ENCODE measurements at regions of chr14 and their contacts with region 1.

Region 1: DNA sequence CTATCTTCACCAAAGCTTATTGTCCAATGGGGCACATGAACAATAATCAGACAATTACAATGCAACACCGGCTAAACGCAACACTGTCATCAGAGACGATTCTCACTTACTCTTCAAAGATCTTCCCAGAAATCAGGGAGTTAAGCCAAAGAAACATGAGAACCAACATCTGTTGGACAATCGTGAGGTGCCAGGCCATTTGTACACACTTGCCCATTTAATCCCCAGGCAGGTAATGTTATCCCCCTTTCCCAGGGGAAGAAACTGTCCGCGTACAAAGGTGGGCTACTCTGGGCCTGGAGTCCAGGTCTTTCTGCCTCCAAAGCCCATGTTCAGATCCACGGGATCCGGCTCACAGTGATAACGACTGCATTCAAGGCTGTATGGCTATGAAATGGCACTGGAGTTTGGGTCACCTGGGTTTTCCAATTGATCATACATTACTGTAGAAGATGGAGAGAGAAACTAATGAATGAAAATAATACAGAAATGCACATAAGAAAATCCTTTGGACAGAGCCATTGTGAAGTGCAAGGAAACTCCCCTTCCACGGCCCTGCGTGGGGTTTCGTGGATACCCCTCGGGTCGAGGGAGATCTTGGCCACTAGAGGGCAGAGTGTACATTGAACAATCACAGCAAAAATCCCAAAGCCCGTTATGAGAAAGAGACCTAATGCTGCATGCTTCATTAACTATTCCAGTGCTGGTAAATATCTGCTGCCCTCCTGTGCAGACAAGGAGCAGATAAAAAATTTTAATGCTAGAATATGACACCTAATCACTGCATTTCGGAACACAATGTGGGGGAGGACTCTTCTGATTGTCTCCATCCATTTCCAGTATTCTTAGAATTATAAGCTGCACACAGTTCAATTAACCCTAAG is 111.4 kb downstream of the EGLN3 start:
- DNase-seq: peak in 8 of 10 donors; percentile 36 to 70 (median 56)
- H3K4me3 ChIP-seq: peak overlapping the region in 4 of 59 donors; percentile 11 to 20 (median 16)
- H3K27ac ChIP-seq: peak overlapping the region in 14 of 59 donors; percentile 0 to 75 (median 24)
- H3K27me3 ChIP-seq: peaks cover 0 to 3% (median 0%) of the 10 kb centered on the region in 45 donors
- CTCF ChIP-seq: peak; percentile 81 to 97 (median 92)

Region 2: GRCh38 chr14:33938131-33938949 is 98.9 kb after region 1 on chr14:
- intact Hi-C with region 1: loop called in 1 of 2 experiments (anchors 5 kb)
- DNase-seq: peak in 8 of 10 donors; percentile 39 to 68 (median 60)
- H3K4me3 ChIP-seq: peak overlapping the region in 52 of 59 donors; percentile 2 to 61 (median 32)
- H3K27ac ChIP-seq: peak overlapping the region in 58 of 59 donors; percentile 12 to 88 (median 72)
- H3K27me3 ChIP-seq: no peaks in the 10 kb centered on the region
- CTCF ChIP-seq: peak in 1 of 56 donors; percentile 12

Region 3: GRCh38 chr14:34018564-34019244 is 179.3 kb after region 1 on chr14:
- intact Hi-C with region 1: loop called in 1 of 2 experiments (anchors 5 kb)
- DNase-seq: peak in 2 of 10 donors; percentile 18
- H3K4me3 ChIP-seq: peak overlapping the region; percentile 23 to 71 (median 53)
- H3K27ac ChIP-seq: peak overlapping the region in 34 of 59 donors; percentile 8 to 72 (median 34)
- H3K27me3 ChIP-seq: no peaks in the 10 kb centered on the region
- CTCF ChIP-seq: no peak

Region 4: DNA sequence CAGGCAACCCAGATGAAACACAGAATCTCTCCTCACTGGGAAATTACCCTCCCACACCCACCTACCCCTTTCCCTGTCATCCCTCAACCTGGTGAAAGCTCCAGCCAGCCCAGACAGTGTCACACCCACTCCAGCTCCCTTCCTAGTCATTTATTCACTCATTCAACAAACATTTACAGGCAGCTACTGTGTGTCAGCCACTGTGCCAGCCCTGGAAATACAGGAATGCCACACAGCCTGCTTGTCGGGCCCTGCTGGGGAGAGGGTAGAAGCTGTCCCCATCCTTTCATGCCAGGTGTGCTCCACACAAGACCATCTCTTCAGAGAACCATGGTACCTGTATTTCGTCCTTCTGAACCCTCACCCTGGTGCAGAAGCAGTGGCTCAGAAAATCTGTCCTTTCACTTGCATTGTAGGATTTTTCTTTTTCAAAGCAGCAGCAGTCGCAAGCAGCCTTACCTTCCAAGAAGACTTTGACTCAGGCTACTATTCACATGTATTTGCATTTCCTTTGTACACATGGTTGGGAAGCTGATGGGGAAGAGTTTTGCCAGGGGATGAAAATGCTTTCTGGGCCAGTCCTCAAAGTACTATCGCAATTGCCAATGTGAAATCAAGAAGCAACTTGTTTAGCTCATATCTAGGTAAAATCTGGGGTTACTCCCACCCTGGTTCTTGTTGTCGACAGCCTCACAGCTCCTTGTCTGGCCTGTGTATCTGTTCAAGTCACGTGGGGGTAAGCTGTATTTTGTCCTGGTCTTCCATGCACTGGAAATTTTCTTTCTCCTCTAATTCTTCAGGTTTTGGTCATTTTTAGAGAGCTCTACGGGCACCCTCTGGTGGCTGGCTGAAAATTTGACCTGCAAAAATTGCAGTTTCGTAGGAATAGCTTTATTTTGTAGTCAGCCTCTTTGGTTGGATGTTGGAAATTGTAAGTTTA is 258.9 kb after region 1 on chr14:
- intact Hi-C with region 1: loop called (anchors 2 kb)
- DNase-seq: peak in 7 of 10 donors; percentile 25 to 72 (median 50)
- H3K4me3 ChIP-seq: no peak overlapping the region
- H3K27ac ChIP-seq: peak overlapping the region in 23 of 59 donors; percentile 3 to 62 (median 14)
- H3K27me3 ChIP-seq: peaks cover 0 to 2% (median 0%) of the 10 kb centered on the region in 45 donors
- CTCF ChIP-seq: peak; percentile 63 to 88 (median 76)

Region 5: GRCh38 chr14:34227834-34228649 is 388.6 kb after region 1 on chr14:
- intact Hi-C with region 1: loop called in 1 of 2 experiments (anchors 2 kb)
- DNase-seq: peak; percentile 35 to 77 (median 64)
- H3K4me3 ChIP-seq: peak overlapping the region in 52 of 59 donors; percentile 10 to 63 (median 38)
- H3K27ac ChIP-seq: peak overlapping the region in 3 of 59 donors; percentile 31 to 61 (median 56)
- H3K27me3 ChIP-seq: no peaks in the 10 kb centered on the region
- CTCF ChIP-seq: peak; percentile 33 to 91 (median 81)

Region 6: GRCh38 chr14:34300882-34301734 is 461.7 kb after region 1 on chr14:
- intact Hi-C with region 1: loop called (anchors 10 kb)
- DNase-seq: peak in 1 of 10 donors; percentile 35
- H3K4me3 ChIP-seq: no peak overlapping the region
- H3K27ac ChIP-seq: peak overlapping the region in 27 of 59 donors; percentile 2 to 74 (median 48)
- H3K27me3 ChIP-seq: no peaks in the 10 kb centered on the region
- CTCF ChIP-seq: peak; percentile 56 to 87 (median 76)